Prostate gland (tissue), 2 donors: ENCODE measurements at regions of chr6 and their contacts with region 1.

Region 1: DNA sequence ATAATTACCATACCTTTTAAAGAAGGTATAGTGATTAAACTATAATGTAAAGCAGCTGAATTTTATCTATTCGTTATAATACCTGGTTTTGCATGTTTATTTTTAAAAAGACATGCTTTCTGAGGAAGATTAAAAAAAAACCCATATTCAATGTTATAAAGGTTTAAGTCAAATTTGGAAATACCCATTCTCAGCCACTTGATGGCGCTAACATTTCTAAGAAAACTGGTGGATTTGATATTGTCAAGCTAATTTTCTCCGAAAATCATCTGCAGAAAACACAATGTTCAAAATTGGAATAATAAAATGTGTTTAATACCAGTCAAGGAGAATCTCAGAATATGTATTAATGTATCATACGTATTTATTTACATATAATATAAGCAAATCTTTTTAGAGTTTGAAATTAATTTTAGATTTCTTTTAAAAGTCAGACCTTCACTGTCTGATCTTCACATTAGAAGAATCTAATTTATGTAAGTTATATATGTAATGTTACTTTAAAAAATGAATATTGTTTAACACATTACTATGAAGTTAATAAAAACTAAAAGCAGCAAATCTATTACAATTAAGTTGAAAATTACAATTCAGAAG is 35.0 kb downstream of the SHPRH start:
- DNase-seq: no peak
- H3K4me3 ChIP-seq: no peak overlapping the region
- H3K27ac ChIP-seq: no peak overlapping the region
- H3K4me1 ChIP-seq: no peaks in the 10 kb centered on the region
- H3K27me3 ChIP-seq: no peaks in the 10 kb centered on the region
- CTCF ChIP-seq: peak in 3 of 4 experiments; percentile 42 to 49 (median 45)
- POLR2A ChIP-seq: no peak

Region 2: GRCh38 chr6:146161664-146162063 is 232.5 kb after region 1 on chr6:
- intact Hi-C with region 1: no loop called
- DNase-seq: no peak
- H3K4me3 ChIP-seq: no peak overlapping the region
- H3K27ac ChIP-seq: no peak overlapping the region
- H3K4me1 ChIP-seq: no peaks in the 10 kb centered on the region
- H3K27me3 ChIP-seq: no peaks in the 10 kb centered on the region
- CTCF ChIP-seq: no peak
- POLR2A ChIP-seq: no peak

Region 3: DNA sequence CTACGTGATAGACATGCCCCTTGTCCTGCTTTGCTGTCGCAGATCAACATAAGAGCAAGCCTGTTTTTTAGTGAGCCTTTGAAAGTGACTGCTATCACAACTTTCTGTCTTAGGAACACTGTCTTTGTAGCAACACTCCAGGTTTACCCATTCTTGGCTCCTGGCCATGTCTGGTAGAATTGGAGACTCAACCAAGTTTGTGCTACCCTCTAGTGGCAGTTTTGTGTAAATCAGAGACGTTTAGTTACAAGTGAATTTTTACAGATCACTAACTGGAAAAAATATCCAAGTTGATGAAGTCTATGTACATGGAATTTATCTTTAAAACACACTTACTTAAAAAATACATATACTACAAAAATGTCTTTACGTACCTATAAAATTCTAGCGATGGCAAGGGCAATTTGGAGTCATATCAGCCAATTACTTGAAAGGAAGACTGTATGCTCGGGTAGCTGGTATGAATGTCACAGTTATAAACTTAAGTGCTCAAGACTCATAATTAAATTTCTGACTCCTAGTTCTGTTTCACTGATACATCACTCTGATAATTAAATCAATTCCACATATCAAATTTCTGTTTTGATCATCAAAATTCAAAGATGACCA is 771.0 kb after region 1 on chr6:
- intact Hi-C with region 1: loop called (anchors 5 kb)
- DNase-seq: peak; percentile 82
- H3K4me3 ChIP-seq: no peak overlapping the region
- H3K27ac ChIP-seq: no peak overlapping the region
- H3K4me1 ChIP-seq: no peaks in the 10 kb centered on the region
- H3K27me3 ChIP-seq: no peaks in the 10 kb centered on the region
- CTCF ChIP-seq: peak; percentile 40 to 73 (median 68)
- POLR2A ChIP-seq: no peak